Psoas muscle (tissue), 8 donors: ENCODE measurements at regions of chr1 and their contacts with region 1.

Region 1: DNA sequence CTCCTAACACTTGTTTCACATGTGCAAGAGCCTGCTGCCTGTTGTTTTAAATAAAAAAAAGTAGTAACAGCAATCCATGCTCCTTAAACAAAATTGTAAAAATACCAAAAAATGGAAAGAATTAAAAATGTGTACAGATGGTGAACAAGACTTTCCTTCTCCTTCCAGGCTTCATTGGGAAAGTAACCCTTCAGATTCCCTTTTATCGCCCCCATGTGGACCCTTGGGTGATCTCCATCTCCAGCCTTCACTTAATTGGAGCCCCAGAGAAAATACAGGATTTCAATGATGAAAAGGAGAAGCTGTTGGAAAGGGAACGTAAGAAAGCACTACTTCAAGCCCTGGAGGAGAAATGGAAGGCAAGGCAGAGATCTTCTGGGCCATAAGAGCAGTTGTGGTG is 14.2 kb downstream of the VPS13D start:
- DNase-seq: no peak
- ATAC-seq: no peak
- H3K4me3 ChIP-seq: no peak overlapping the region
- H3K27ac ChIP-seq: no peak overlapping the region
- H3K4me1 ChIP-seq: peaks cover 12% of the 10 kb centered on the region
- H3K27me3 ChIP-seq: no peaks in the 10 kb centered on the region
- CTCF ChIP-seq: no peak

Region 2: DNA sequence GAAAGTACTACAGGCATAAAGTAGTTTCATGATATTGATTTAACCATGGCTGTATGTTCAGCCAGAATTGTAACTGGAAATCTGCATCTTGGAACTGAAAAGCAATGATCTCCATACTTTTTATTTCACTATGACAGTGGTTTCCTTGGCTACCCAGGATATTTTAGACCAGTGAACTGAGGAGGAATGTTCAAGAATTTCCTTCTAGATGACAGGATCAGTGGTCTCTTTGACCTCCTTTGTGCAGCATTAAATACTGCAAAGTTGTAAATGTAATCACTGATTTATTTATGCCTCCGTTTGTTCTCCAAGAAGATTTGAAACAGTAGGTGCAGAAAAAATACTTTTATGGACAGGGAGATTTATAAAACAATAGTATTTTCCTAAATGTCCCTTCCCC is 25.3 kb after region 1 on chr1:
- intact Hi-C with region 1: loop called in 1 of 2 experiments (anchors 1 kb)
- DNase-seq: no peak
- ATAC-seq: no peak
- H3K4me3 ChIP-seq: no peak overlapping the region
- H3K27ac ChIP-seq: no peak overlapping the region
- H3K4me1 ChIP-seq: peaks cover 4% of the 10 kb centered on the region
- H3K27me3 ChIP-seq: no peaks in the 10 kb centered on the region
- CTCF ChIP-seq: no peak